Activated naive CD4-positive, alpha-beta T cell treated with anti-CD3 and anti-CD28 coated beads, Interleukin-2, amount 10 ng/mL, durations not matched to agents 7 days and 5 days (primary cell): ENCODE measurements at regions of chr1 and their contacts with region 1.

Region 1: DNA sequence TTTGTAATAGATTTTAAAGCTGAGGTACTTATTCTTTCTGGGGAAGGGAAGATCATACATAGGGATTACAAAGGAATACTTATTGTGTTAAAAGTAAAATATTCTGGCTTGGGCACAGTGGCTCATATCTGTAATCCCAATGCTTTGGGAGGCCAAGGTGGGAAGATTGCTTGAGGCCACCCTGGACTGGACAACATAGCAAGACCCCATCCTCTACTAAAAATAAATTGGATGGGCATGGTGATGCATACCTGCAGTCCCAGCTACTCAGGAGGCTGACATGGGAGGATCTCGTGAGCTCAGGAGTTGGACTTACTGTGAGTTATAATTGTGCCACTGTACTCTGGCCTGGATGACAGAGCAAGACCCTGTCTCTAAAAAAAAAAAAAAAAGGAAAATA is 27.6 kb downstream of the GABPB2 start:
- DNase-seq: no peak
- H3K4me3 Mint-ChIP-seq: no peak overlapping the region
- H3K27ac Mint-ChIP-seq: no peak overlapping the region
- H3K4me1 Mint-ChIP-seq: no peaks in the 10 kb centered on the region
- H3K27me3 Mint-ChIP-seq: no peaks in the 10 kb centered on the region

Region 2: DNA sequence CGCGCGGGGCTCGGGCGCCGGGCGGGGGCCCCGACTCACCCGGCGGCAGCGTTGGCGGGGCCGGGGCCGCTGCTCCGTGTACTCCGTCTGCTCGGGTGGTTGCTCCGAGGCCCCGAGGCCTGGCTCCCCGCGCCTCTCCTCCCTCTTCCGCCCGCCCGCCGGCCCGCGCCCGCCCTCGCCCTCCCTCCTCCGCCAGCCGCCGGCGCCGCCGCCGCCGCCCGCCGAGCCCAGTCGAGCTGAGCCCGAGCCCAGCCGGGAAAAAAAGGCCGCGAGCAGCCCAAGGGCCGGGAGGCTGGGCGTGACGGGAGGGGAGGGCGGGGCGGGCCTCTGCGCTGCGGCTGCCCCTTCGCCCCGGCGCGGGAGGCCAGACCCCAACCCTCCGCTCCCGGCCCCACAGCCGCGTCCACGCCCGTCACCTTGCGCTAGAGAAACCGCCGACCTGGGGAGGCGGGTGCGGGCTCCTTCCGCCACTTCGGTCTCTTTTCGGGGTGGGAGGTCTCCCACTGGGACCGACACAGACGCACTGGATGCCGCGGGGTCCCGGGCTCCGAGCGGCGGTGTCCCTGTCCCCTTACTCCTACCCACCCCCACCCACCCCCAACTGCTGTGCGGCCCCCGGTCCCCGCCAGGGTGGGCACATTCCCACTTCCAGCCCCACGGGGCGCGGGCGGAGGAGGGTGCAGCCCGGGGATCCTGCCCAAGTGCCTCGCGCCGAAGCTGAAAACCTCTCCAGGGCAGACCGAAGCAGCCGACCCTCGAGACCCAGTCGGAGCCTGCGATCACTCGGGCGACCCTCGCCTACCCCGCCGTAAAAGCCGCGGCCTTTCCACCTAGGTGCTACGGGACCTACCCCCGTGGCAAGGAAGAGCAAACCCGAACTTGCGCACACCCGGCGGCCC is 123.3 kb before region 1 on chr1 and contains the start of gene CERS2:
- CTCF ChIA-PET with region 1: no interaction called
- DNase-seq: peak; percentile 89
- H3K4me3 Mint-ChIP-seq: peak within 1 kb of the TSS; percentile 90
- H3K27ac Mint-ChIP-seq: peak within 1 kb of the TSS; percentile 86
- H3K4me1 Mint-ChIP-seq: peaks cover 77% of the 10 kb centered on the region
- H3K27me3 Mint-ChIP-seq: peaks cover 13% of the 10 kb centered on the region

Region 3: GRCh38 chr1:151156515-151156819 is 58.3 kb after region 1 on chr1 and contains the start of gene TNFAIP8L2:
- CTCF ChIA-PET with region 1: interaction called, 160 read pairs
- DNase-seq: peak; percentile 90
- H3K4me3 Mint-ChIP-seq: peak within 1 kb of the TSS; percentile 97
- H3K27ac Mint-ChIP-seq: peak within 1 kb of the TSS; percentile 94
- H3K4me1 Mint-ChIP-seq: peaks cover 56% of the 10 kb centered on the region
- H3K27me3 Mint-ChIP-seq: no peaks in the 10 kb centered on the region